ENCODE measurements at regions of chr6 and their contacts with region 1.

Region 1: DNA sequence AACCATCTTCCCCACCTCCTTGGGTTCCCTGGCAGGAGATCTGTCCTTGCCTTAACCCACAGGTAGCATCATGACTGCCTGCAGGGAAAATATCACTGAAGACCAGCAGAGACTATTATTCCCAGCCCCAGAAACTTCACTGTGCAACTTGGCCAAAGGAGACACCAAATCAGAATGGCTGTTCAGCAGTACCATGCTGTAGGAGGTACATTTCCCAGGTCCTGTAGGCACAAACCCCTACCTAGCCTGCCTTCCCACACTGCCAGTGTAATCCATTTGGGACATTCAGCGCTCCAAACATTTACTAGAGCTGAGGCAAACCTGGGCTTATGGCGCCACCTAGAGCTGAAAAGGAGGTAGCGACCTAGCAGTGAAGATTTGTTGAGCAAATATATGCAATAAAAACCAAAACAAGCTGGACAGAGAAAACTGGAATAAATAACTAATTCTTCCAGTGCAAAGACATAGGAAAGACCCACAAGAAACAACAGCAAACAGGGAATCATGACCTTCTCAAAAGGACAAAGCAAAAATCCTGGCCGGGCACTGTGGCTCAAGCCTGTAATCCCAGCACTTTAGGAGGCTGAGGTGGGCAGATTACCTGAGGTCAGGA is 60.3 kb downstream of the VTA1 start:
- DNase-seq: peak; percentile 16
- H3K4me3 ChIP-seq: no peak overlapping the region
- H3K27ac ChIP-seq: no peak overlapping the region
- H3K4me1 ChIP-seq: no peaks in the 10 kb centered on the region
- H3K27me3 ChIP-seq: no peaks in the 10 kb centered on the region
- CTCF ChIP-seq: peak; percentile 84

Region 2: DNA sequence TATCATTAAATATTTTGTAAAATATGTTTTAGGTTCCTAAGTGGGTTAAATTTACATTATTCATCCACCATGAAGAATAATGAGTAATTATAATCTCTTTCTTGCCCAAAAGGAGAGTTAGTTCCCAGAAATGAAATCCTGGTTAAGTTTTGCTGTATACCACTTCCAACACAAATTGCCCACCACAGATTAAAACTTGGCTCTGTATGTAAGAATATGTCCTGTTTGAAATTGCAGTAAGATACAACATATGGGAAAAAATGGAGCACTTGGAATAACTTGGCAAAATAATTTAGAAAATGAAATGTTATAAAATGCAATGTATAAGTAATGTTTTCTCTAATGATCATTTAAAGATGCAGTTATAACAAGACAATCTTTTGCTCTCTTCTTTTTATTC is 139.0 kb before region 1 on chr6:
- intact Hi-C with region 1: no loop called
- DNase-seq: no peak
- H3K4me3 ChIP-seq: no peak overlapping the region
- H3K27ac ChIP-seq: no peak overlapping the region
- H3K4me1 ChIP-seq: no peaks in the 10 kb centered on the region
- H3K27me3 ChIP-seq: no peaks in the 10 kb centered on the region
- CTCF ChIP-seq: no peak

Region 3: DNA sequence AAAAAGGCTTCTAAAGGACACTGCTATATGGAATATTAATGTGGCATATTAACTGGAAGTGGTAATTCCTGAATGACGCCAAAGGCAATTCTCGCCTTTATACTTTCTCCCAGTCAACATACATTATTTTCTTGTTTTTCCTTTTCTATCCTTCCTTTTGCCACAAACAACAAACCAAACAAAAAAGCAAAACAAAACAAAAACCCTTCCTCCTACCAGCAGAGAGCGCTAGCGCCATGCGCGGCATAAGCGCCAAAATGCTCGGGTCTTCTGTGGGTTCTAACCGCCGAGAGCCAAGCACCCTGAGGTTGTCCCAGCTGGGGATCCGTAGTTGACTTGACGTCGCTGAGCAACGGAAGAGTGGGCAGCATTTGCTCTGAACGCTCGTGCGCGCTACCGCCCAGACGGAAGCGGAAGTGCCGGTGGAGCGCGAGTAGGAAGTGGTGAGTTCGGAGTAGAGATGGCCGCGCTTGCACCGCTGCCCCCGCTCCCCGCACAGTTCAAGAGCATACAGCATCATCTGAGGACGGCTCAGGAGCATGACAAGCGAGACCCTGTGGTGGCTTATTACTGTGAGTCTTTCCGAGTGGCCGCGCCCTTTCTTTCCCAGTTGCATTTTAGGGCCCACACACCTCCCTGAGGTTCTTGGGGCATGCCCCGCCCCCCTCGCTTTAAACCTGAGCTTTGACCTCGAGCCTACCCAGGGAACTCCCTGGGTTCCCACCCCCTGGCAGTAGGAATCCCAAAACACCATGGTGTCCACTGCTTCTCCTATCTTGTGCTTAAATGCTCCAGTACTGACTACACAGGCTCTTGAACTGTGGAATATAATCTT is 60.3 kb before region 1 on chr6 and contains the starts of genes NMBR and VTA1:
- intact Hi-C with region 1: loop called (anchors 5 kb)
- DNase-seq: peak; percentile 96
- H3K4me3 ChIP-seq: peak within 1 kb of the TSS; percentile 96
- H3K27ac ChIP-seq: peak within 1 kb of the TSS; percentile 80
- H3K4me1 ChIP-seq: peaks cover 38% of the 10 kb centered on the region
- H3K27me3 ChIP-seq: no peaks in the 10 kb centered on the region
- CTCF ChIP-seq: peak; percentile 92
- total RNA-seq, gene NMBR: not detected
- total RNA-seq, gene VTA1: 33.2 TPM

Region 4: GRCh38 chr6:142246960-142247359 is 39.6 kb after region 1 on chr6:
- intact Hi-C with region 1: no loop called
- DNase-seq: no peak
- H3K4me3 ChIP-seq: no peak overlapping the region
- H3K27ac ChIP-seq: no peak overlapping the region
- H3K4me1 ChIP-seq: no peaks in the 10 kb centered on the region
- H3K27me3 ChIP-seq: no peaks in the 10 kb centered on the region
- CTCF ChIP-seq: no peak

Region 5: DNA sequence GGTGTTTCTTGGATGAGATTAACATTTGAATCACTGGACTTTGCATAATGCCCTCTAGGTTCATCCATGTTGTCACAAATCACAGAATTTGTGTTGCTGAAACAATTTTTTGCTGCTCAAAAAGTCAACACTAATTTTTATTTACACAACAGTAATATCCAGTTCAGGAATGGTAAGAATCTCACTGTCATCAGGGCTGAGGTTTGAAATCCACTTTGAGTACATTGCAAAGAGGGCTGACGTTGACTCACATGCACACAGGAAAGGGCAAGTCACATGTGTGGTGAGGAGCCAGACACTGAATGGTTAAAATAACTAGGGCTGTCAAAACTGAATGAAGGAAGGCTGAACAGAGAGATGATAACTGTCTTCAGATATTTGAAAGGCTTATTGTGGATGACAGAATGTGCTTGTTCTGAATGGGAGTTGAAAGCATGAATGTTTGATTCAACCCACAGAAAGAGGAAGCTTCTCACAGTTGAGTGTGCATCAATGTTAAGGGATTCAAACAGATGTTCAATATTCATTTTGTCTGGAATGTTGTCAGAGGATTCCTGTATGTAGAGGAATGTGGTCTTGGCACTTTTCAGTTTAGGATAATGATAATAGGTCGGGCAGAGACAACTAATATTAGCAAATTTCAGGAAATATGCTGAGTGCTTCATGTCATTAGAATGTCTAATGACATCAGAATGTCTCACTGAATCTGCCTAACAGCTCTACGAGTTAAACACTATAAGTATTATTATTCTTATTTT is 90.8 kb after region 1 on chr6:
- intact Hi-C with region 1: no loop called
- DNase-seq: no peak
- H3K4me3 ChIP-seq: no peak overlapping the region
- H3K27ac ChIP-seq: no peak overlapping the region
- H3K4me1 ChIP-seq: peaks cover 19% of the 10 kb centered on the region
- H3K27me3 ChIP-seq: peaks cover 35% of the 10 kb centered on the region
- CTCF ChIP-seq: no peak